ENCODE measurements at regions of chr6 and their contacts with region 1.

Region 1: DNA sequence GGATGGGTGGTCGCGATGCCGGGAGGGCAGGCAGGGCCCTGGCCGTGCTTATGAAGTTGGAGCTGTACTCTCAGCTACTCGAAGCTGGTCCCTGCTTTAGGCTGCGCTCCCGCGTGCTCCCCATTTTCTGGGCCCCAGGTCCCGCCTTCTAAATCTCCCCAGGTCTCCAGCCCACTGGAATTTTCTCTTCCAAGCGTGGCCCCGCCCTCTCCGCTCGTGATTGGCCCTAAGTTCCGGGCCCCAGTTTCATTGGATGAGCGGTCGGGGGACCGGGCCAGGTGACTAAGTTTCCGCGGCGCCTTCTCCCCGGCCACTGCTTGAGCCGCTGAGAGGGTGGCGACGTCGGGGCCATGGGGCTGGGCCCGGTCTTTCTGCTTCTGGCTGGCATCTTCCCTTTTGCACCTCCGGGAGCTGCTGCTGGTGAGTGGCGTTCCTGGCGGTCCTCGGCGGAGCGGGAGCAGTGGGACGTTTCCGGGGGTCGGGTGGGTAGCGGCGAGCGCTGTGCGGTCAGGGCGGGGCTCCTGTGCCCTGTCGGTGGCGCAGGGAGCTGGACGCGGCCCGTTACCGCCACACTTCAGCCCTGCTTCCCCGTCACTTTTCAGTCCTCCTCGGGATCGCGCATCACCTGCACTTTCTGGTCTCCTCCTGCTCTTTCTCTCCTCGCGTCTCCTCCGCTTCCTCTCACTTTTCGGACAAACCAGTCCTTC is at the start of gene MICA:
- DNase-seq: peak; percentile 84 to 93 (median 91)
- ATAC-seq: peak; percentile 75 to 83 (median 82)
- H3K4me3 ChIP-seq: peak within 1 kb of the TSS; percentile 26 to 70 (median 52)
- H3K27ac ChIP-seq: peak within 1 kb of the TSS; percentile 51 to 99 (median 74)
- H3K4me1 ChIP-seq: peaks cover 7 to 16% (median 7%) of the 10 kb centered on the region in 3 donors
- H3K27me3 ChIP-seq: no peaks in the 10 kb centered on the region
- CTCF ChIP-seq: no peak
- total RNA-seq, gene MICA: 4.8 to 15.8 (median 5.7) TPM

Region 2: GRCh38 chr6:31197559-31198305 is 205.7 kb before region 1 on chr6:
- intact Hi-C with region 1: no loop called
- DNase-seq: peak; percentile 89 to 95 (median 92)
- ATAC-seq: peak; percentile 87 to 93 (median 88)
- H3K4me3 ChIP-seq: peak overlapping the region; percentile 23 to 59 (median 45)
- H3K27ac ChIP-seq: peak overlapping the region; percentile 76 to 98 (median 97)
- H3K4me1 ChIP-seq: peaks cover 0 to 15% (median 6%) of the 10 kb centered on the region in 3 donors
- H3K27me3 ChIP-seq: no peaks in the 10 kb centered on the region
- CTCF ChIP-seq: no peak

Region 3: GRCh38 chr6:31441365-31442267 is 38.2 kb after region 1 on chr6:
- intact Hi-C with region 1: loop called in 2 of 3 experiments (anchors 5 kb)
- DNase-seq: peak; percentile 59 to 95 (median 82)
- ATAC-seq: peak; percentile 94 to 100 (median 99)
- H3K4me3 ChIP-seq: no peak overlapping the region
- H3K27ac ChIP-seq: no peak overlapping the region
- H3K4me1 ChIP-seq: no peaks in the 10 kb centered on the region
- H3K27me3 ChIP-seq: no peaks in the 10 kb centered on the region
- CTCF ChIP-seq: peak; percentile 45 to 73 (median 64)